ENCODE measurements at regions of chr6 and their contacts with region 1.

Region 1: DNA sequence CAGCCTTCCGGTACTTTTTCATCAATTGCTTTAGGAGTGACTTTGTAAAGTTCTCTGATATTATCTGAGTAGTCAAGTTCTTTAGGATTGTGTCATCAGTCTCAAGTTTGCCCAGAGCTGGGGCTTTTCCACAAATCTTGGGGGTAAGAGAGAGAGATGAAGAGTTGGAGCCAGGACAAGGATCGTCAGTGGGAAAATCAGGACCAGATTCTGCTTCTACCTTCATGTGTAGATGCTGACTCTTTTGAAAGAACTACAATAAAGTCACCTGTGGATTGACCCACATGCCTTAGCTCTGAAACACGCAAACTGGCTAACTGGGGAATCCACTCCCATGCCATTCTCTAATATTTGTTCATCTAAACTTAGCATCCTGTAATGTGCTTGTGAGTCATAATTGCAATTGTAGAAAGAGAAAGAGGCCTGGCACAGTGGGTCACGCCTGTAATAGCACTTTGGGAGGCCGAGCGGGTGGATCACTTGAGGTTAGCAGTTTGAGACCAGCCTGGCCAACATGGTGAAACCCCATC is 15.6 kb upstream of the BICRAL start:
- DNase-seq: no peak
- H3K4me3 ChIP-seq: no peak overlapping the region
- H3K27ac ChIP-seq: no peak overlapping the region
- H3K4me1 ChIP-seq: peaks cover 0 to 11% (median 6%) of the 10 kb centered on the region in 4 experiments; a peak in 4 of 7 replicates
- H3K27me3 ChIP-seq: no peaks in the 10 kb centered on the region; a peak in 1 of 7 replicates
- CTCF ChIP-seq: no peak
- EP300 ChIP-seq: no peak
- POLR2A ChIP-seq: no peak
- RAD21 ChIP-seq: no peak

Region 2: DNA sequence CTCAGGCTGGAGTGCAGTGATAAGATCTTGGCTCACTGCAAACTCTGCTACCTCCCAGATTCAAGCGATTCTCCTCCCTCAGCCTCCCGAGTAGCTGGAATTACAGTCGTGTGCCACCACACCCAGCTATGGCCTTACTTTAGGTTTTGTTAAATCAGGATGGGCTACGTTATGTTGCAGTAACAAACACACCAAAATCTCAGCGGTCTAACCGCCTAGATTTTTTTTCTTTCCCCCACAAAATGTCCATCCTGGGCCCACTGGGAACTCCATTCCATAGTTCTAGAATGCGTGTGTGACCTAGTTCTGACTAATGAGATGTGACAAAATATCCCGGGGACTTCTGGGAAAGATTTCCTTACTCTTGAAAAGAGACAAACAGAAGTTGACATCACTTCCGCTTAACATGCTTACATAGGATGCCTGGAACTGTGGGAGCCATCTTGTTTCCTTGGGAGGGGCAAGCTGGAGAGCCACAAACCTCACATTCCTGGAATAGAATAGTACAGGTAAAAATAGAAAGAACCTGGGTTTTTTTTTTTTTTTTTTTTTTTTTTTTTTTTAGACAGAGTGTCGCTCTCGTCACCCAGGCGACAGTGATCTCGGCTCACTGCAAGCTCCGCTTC is 272.2 kb before region 1 on chr6:
- CTCF ChIA-PET with region 1: no interaction called
- POLR2A ChIA-PET with region 1: no interaction called
- DNase-seq: no peak
- H3K4me3 ChIP-seq: no peak overlapping the region
- H3K27ac ChIP-seq: no peak overlapping the region
- H3K4me1 ChIP-seq: no peaks in the 10 kb centered on the region
- H3K27me3 ChIP-seq: no peaks in the 10 kb centered on the region
- CTCF ChIP-seq: no peak
- EP300 ChIP-seq: no peak
- POLR2A ChIP-seq: no peak
- RAD21 ChIP-seq: no peak

Region 3: DNA sequence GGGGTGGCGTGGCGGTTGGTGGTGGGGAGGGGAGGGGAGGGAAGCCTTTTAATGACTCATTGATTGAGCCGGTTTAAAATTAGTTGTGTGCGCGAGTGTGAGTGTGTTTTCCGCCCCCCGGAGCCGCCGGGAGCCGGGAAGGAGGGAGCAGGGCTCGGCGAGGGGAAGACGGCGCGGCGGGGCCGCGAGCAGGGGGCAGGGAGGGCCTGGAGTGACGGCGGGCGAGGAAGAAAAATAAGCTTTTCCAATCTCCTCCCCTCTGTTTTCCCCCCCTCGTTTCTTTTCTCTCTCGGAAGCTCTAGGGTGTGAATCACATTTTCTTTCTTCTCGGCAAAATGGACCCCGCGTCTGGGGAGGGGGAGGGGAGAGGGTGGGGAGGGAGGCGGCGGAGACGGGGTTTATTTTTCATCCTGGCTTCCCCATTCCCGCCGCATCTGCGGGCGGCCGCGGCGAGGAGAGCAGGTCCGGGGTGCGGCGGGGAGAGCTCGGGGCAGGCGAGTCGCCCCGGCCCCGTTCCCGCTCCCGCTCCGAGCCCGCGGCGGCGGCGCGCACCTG is 16.5 kb after region 1 on chr6:
- CTCF ChIA-PET with region 1: interaction called, 6 read pairs
- POLR2A ChIA-PET with region 1: interaction called, 268 read pairs
- DNase-seq: peak in 1 of 2 experiments; percentile 78
- H3K4me3 ChIP-seq: peak overlapping the region; percentile 82 to 96 (median 88)
- H3K27ac ChIP-seq: peak overlapping the region; percentile 98
- H3K4me1 ChIP-seq: peaks cover 0 to 9% (median 0%) of the 10 kb centered on the region in 4 experiments; a peak in 3 of 7 replicates
- H3K27me3 ChIP-seq: no peaks in the 10 kb centered on the region
- CTCF ChIP-seq: no peak
- EP300 ChIP-seq: no peak; a peak in 1 of 3 replicates
- POLR2A ChIP-seq: peak; percentile 80 to 83; a peak in 2 of 3 replicates
- RAD21 ChIP-seq: no peak